Natural killer cell (primary cell): ENCODE measurements at regions of chr11 and their contacts with region 1.

Region 1: GRCh38 chr11:72293910-72294615 is 50.1 kb upstream of the PHOX2A start:
- DNase-seq: no peak
- ATAC-seq: no peak
- H3K4me3 ChIP-seq: no peak overlapping the region
- H3K4me3 Mint-ChIP-seq: no peak overlapping the region
- H3K27ac ChIP-seq: no peak overlapping the region
- H3K27ac Mint-ChIP-seq: no peak overlapping the region
- H3K4me1 ChIP-seq: no peaks in the 10 kb centered on the region
- H3K4me1 Mint-ChIP-seq: no peaks in the 10 kb centered on the region
- H3K27me3 ChIP-seq: no peaks in the 10 kb centered on the region
- H3K27me3 Mint-ChIP-seq: no peaks in the 10 kb centered on the region
- CTCF ChIP-seq: no peak

Region 2: DNA sequence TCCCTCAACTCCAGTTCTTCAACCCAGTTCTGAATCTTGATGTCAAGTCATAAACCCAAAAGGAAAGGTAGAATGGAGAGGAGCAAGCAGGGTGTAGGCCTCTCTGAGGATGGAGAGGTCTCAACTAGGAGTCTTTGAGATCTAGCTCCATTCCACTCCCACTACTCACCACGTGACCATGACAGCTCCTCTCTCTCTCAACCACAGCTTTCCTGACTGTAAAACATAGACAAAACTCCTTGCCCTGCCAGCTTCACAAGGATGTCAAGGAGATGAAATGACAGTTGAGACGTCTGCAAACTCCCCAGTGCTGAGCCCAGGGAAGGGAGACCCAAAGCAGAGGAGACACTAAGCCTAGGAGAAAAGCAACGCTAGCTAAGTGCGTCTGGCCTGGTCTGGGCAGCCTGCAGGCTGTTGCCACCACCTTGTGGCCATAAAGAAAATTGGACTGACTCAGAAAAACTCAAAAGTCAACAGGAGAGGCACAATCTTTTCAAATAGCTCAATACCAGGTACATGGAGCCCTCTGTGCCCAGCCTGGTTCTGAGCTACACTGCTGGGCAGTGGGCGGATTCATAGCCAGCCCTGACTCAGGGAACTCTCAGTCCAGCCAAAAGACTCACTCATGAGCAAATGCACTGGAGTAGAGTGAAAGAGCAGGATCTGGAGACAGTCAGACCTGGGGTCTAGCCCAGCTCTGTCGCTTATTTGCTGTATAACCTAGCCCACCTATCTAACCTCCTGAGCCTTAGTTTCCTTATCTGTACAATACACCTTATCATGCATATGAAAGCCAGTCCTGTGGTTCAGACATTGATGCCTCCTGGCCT is 136.9 kb after region 1 on chr11:
- intact Hi-C with region 1: loop called (anchors 5 kb)
- DNase-seq: peak in 1 of 2 donors; percentile 70
- ATAC-seq: no peak
- H3K4me3 ChIP-seq: no peak overlapping the region
- H3K4me3 Mint-ChIP-seq: peak overlapping the region; percentile 35
- H3K27ac ChIP-seq: no peak overlapping the region
- H3K27ac Mint-ChIP-seq: peak overlapping the region; percentile 43 to 78
- H3K4me1 ChIP-seq: peaks cover 24% of the 10 kb centered on the region
- H3K4me1 Mint-ChIP-seq: peaks cover 35 to 50% of the 10 kb centered on the region in 2 donors
- H3K27me3 ChIP-seq: no peaks in the 10 kb centered on the region
- H3K27me3 Mint-ChIP-seq: no peaks in the 10 kb centered on the region
- CTCF ChIP-seq: peak; percentile 53